ENCODE measurements at regions of chr19 and their contacts with region 1.

Region 1: DNA sequence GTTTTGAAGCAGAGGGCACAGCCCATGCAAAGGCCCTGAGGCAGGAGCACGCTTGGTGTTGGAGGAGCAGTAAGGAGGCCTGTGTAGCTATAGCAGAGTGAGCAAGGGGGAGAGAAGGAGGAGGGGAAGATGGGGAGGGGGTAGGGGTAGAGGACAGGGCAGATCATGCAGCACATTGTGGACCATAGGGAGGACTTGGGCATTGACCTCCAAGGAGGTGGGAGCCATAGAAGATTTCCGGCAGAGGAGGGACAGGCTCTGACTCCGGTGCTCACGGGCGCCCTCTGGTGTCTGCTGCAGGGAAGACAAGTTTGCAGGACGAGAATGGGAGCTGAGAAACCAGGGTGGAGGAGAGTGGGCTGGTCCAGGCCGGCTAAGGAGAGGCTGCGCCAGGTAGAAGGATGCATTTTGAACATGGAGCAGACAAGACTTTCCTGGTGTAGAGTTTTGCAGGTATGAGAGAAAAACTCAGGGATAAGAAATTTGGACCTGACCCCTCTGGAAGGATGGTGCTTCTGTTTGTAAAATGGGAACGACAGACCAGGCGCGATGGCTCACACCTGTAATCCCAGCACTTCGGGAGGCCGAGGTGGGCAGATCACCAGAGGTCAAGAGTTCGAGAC is 13.7 kb upstream of the CREB3L3 start:
- DNase-seq: peak; percentile 75 to 96 (median 83)
- ATAC-seq: peak; percentile 96
- H3K4me3 ChIP-seq: no peak overlapping the region
- H3K4me3 Mint-ChIP-seq: no peak overlapping the region
- H3K27ac ChIP-seq: no peak overlapping the region
- H3K27ac Mint-ChIP-seq: no peak overlapping the region
- H3K4me1 ChIP-seq: peaks cover 8% of the 10 kb centered on the region
- H3K4me1 Mint-ChIP-seq: peaks cover 8% of the 10 kb centered on the region
- H3K27me3 ChIP-seq: no peaks in the 10 kb centered on the region
- H3K27me3 Mint-ChIP-seq: peaks cover 11% of the 10 kb centered on the region
- CTCF ChIP-seq: peak; percentile 83

Region 2: GRCh38 chr19:3665681-3666544 is 473.8 kb before region 1 on chr19:
- CTCF ChIA-PET with region 1: no interaction called
- POLR2A ChIA-PET with region 1: no interaction called
- intact Hi-C with region 1: loop called in 1 of 2 experiments (anchors 2 kb)
- DNase-seq: peak; percentile 56 to 91 (median 77)
- ATAC-seq: peak; percentile 98
- H3K4me3 ChIP-seq: no peak overlapping the region
- H3K4me3 Mint-ChIP-seq: no peak overlapping the region
- H3K27ac ChIP-seq: no peak overlapping the region
- H3K27ac Mint-ChIP-seq: no peak overlapping the region
- H3K4me1 ChIP-seq: peaks cover 11% of the 10 kb centered on the region
- H3K4me1 Mint-ChIP-seq: peaks cover 11% of the 10 kb centered on the region
- H3K27me3 ChIP-seq: no peaks in the 10 kb centered on the region
- H3K27me3 Mint-ChIP-seq: no peaks in the 10 kb centered on the region
- CTCF ChIP-seq: peak; percentile 85

Region 3: GRCh38 chr19:4007021-4007835 is 132.5 kb before region 1 on chr19 and contains the start of gene PIAS4:
- CTCF ChIA-PET with region 1: interaction called, 15 read pairs
- POLR2A ChIA-PET with region 1: interaction called, 3 read pairs
- intact Hi-C with region 1: no loop called
- DNase-seq: peak; percentile 89 to 99 (median 96)
- ATAC-seq: peak; percentile 91
- H3K4me3 ChIP-seq: peak within 1 kb of the TSS; percentile 68 to 87
- H3K4me3 Mint-ChIP-seq: peak within 1 kb of the TSS; percentile 83
- H3K27ac ChIP-seq: peak within 1 kb of the TSS; percentile 46 to 58
- H3K27ac Mint-ChIP-seq: peak within 1 kb of the TSS; percentile 84
- H3K4me1 ChIP-seq: peaks cover 38% of the 10 kb centered on the region
- H3K4me1 Mint-ChIP-seq: peaks cover 24% of the 10 kb centered on the region
- H3K27me3 ChIP-seq: no peaks in the 10 kb centered on the region
- H3K27me3 Mint-ChIP-seq: no peaks in the 10 kb centered on the region
- CTCF ChIP-seq: no peak
- total RNA-seq, gene PIAS4: 11.6 to 14.9 TPM

Region 4: GRCh38 chr19:4089400-4089908 is 50.3 kb before region 1 on chr19:
- CTCF ChIA-PET with region 1: interaction called, 14 read pairs
- POLR2A ChIA-PET with region 1: interaction called, 5 read pairs
- intact Hi-C with region 1: loop called in 1 of 2 experiments (anchors 5 kb)
- DNase-seq: peak in 8 of 9 experiments; percentile 35 to 83 (median 55)
- ATAC-seq: peak; percentile 38
- H3K4me3 ChIP-seq: no peak overlapping the region
- H3K4me3 Mint-ChIP-seq: peak overlapping the region; percentile 66
- H3K27ac ChIP-seq: peak overlapping the region; percentile 41 to 78
- H3K27ac Mint-ChIP-seq: peak overlapping the region; percentile 94
- H3K4me1 ChIP-seq: peaks cover 46% of the 10 kb centered on the region
- H3K4me1 Mint-ChIP-seq: peaks cover 44% of the 10 kb centered on the region
- H3K27me3 ChIP-seq: no peaks in the 10 kb centered on the region
- H3K27me3 Mint-ChIP-seq: no peaks in the 10 kb centered on the region
- CTCF ChIP-seq: no peak

Region 5: GRCh38 chr19:4108767-4109625 is 30.7 kb before region 1 on chr19:
- CTCF ChIA-PET with region 1: interaction called, 10 read pairs
- POLR2A ChIA-PET with region 1: interaction called, 5 read pairs
- intact Hi-C with region 1: loop called in 1 of 2 experiments (anchors 1 kb)
- DNase-seq: peak; percentile 59 to 96 (median 83)
- ATAC-seq: peak; percentile 55
- H3K4me3 ChIP-seq: peak overlapping the region in 1 of 2 experiments; percentile 22
- H3K4me3 Mint-ChIP-seq: peak overlapping the region; percentile 60
- H3K27ac ChIP-seq: peak overlapping the region; percentile 73 to 74
- H3K27ac Mint-ChIP-seq: peak overlapping the region; percentile 99
- H3K4me1 ChIP-seq: peaks cover 60% of the 10 kb centered on the region
- H3K4me1 Mint-ChIP-seq: peaks cover 68% of the 10 kb centered on the region
- H3K27me3 ChIP-seq: no peaks in the 10 kb centered on the region
- H3K27me3 Mint-ChIP-seq: no peaks in the 10 kb centered on the region
- CTCF ChIP-seq: no peak

Region 6: DNA sequence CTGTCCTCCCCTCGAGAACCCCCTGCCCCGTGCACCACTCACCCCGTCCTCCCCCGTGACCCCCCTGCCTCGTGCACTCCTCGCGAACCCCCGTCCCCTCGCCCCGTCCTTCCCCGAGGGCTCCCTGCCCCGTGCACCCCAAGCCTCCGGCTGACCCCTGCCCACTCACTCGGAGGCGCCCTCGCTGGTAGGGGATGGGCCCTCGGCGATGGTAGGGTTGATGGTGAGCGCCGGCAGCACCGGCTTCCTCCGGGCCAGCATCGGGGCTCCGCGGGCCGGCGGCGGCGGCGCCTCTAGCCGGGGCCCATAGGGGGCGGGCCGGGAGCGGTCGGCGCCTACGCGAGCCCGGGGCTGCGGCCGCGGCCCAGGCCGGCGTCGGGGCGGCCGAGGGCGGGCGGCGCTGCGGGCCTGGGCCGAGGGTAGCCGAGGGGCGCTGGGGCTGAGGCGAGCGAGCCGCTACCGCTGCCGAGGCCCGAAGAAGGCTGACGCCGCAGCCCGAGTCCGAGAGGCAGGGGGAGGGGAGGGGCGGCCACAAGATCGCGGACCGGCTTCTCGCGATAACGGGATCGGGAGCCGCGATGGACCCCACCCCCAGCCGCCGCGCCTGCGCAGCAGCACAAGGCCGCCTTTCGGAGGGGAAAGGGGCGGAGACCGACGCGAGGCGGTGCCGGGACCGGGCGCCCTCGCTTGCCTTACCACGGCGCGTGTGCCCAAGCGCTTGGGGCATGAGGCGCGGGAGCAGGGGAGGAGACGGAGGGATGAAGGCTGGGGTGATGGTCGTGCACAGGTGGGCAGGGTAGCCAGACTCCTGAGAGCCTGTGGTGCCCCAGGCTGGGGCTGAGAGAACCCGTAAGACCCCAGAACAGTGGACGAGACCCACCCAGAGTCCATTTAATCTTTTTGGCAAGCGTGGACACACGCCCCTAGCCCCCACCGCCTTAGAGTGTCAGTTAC is 15.8 kb before region 1 on chr19 and contains the start of gene MAP2K2:
- CTCF ChIA-PET with region 1: interaction called, 24 read pairs
- POLR2A ChIA-PET with region 1: no interaction called
- intact Hi-C with region 1: loop called in 1 of 2 experiments (anchors 1 kb)
- DNase-seq: peak; percentile 91 to 98 (median 97)
- ATAC-seq: peak; percentile 96
- H3K4me3 ChIP-seq: peak within 1 kb of the TSS; percentile 57 to 72
- H3K4me3 Mint-ChIP-seq: peak within 1 kb of the TSS; percentile 93
- H3K27ac ChIP-seq: peak within 1 kb of the TSS; percentile 52 to 73
- H3K27ac Mint-ChIP-seq: peak within 1 kb of the TSS; percentile 91
- H3K4me1 ChIP-seq: peaks cover 17% of the 10 kb centered on the region
- H3K4me1 Mint-ChIP-seq: peaks cover 25% of the 10 kb centered on the region
- H3K27me3 ChIP-seq: no peaks in the 10 kb centered on the region
- H3K27me3 Mint-ChIP-seq: no peaks in the 10 kb centered on the region
- CTCF ChIP-seq: no peak
- total RNA-seq, gene MAP2K2: 73.9 to 76.8 TPM

Region 7: GRCh38 chr19:4161415-4162077 is 21.8 kb after region 1 on chr19:
- CTCF ChIA-PET with region 1: interaction called, 13 read pairs
- POLR2A ChIA-PET with region 1: no interaction called
- intact Hi-C with region 1: no loop called
- DNase-seq: no peak
- ATAC-seq: no peak
- H3K4me3 ChIP-seq: no peak overlapping the region
- H3K4me3 Mint-ChIP-seq: no peak overlapping the region
- H3K27ac ChIP-seq: no peak overlapping the region
- H3K27ac Mint-ChIP-seq: no peak overlapping the region
- H3K4me1 ChIP-seq: no peaks in the 10 kb centered on the region
- H3K4me1 Mint-ChIP-seq: no peaks in the 10 kb centered on the region
- H3K27me3 ChIP-seq: no peaks in the 10 kb centered on the region
- H3K27me3 Mint-ChIP-seq: no peaks in the 10 kb centered on the region
- CTCF ChIP-seq: no peak

Region 8: DNA sequence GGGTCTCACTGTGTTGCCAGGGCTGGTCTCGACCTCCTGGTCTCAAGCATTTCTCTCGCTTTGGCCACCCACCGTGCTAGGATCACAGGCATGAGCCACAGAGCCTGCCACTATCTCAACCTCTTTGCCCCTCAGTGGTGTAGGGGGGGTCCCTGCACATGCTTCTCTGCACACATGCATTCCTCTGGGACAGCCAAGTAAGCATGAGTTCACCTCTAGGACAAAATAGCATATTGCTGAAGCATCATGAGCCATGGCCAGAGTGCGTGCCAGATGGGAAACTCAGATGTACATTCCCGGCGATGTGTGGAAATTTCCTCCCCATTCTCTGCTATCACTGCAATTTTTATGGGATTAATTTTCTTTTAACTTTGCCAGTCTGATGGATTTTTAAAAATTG is 285.8 kb after region 1 on chr19:
- CTCF ChIA-PET with region 1: no interaction called
- POLR2A ChIA-PET with region 1: no interaction called
- intact Hi-C with region 1: no loop called
- DNase-seq: no peak
- ATAC-seq: no peak
- H3K4me3 ChIP-seq: no peak overlapping the region
- H3K4me3 Mint-ChIP-seq: no peak overlapping the region
- H3K27ac ChIP-seq: no peak overlapping the region
- H3K27ac Mint-ChIP-seq: no peak overlapping the region
- H3K4me1 ChIP-seq: no peaks in the 10 kb centered on the region
- H3K4me1 Mint-ChIP-seq: no peaks in the 10 kb centered on the region
- H3K27me3 ChIP-seq: no peaks in the 10 kb centered on the region
- H3K27me3 Mint-ChIP-seq: no peaks in the 10 kb centered on the region
- CTCF ChIP-seq: no peak

Measured in CD8-positive, alpha-beta T cell (primary cell).